Sigmoid colon (tissue), 7 donors: ENCODE measurements at regions of chr19 and their contacts with region 1.

Region 1: DNA sequence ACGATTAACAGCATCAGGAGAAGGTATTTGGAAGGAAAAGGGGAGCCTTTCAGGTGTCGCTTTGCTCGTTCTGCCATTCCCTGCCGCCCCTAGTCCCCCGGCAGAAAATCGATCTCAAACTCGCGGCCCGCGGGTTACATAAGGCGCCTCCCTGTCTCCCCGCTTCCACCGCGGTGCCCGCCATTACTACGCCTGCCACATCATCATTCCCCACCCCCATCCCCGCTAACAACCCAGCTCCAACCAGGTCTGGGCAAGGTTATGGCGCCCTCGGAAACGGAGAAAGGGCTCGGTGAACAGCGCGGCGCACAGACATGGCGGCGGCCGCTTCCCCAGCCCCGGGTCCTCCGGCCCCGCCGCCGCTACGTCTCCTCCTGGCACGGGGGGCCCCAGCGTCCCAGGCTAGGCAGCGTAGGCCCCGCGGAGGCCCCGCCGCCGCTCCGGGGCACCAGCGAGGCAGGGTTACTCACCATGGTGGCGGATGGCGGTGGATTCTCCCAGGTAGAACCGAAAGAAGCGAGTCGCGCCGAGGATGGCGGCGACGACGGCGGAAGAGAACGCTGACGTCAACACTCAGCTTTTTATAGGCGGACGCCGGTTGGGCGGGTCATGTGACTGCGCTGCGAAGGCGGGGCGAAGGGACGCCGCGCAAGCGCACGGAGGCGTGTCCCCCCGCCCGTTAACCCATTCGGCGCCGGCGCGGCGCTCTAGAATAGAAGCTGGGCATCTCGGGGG is at the start of gene EEF2:
- DNase-seq: peak; percentile 95
- H3K4me3 ChIP-seq: peak within 1 kb of the TSS; percentile 70 to 86 (median 82)
- H3K27ac ChIP-seq: peak within 1 kb of the TSS; percentile 92 to 96 (median 94)
- H3K4me1 ChIP-seq: peaks cover 0 to 62% (median 49%) of the 10 kb centered on the region in 4 donors
- H3K27me3 ChIP-seq: no peaks in the 10 kb centered on the region
- CTCF ChIP-seq: no peak
- EP300 ChIP-seq: peak in 2 of 4 donors; percentile 9 to 23
- POLR2A ChIP-seq: peak; percentile 99
- total RNA-seq, gene EEF2: 1,842 to 2,448 (median 2,055) TPM

Region 2: DNA sequence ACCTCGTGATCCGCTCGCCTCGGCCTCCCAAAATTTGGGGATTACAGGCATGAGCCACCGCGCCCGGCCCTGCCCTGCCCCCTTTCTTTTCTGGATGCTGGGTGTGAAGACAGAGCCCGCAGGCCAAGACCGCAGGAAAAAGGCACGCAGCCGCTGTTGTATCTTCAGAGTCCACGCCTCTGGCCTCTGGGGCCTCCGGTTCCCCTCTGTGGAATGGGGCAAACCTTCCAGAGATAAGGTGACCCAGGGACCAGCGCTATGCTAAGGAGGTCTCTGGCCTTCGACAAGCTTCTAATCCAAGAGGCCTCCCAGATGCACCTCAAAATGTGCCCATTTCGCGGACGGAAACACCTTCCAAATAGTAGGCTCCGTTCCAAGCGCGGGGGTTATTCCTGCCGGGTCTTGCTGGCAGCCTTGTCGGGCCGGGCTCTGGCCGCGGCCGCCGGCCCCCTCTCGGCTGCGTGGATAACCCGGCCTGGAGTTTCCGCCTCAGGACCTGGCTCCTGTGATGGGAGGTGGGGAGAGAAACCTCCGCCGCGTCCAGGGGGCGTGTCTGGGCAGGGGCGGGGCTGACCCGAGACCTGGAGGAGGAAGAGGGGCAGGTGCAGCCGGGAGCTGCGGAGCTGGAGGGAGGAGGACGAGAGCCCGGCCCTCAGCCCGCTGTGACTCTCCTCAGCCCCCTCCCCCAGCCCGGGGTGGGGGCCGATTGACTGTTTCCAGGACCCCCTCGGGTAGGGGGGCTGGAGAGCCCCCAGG is 263.8 kb before region 1 on chr19:
- intact Hi-C with region 1: no loop called
- DNase-seq: peak; percentile 82
- H3K4me3 ChIP-seq: peak overlapping the region in 3 of 4 donors; percentile 3 to 18 (median 5)
- H3K27ac ChIP-seq: no peak overlapping the region
- H3K4me1 ChIP-seq: peaks cover 0 to 23% (median 19%) of the 10 kb centered on the region in 4 donors
- H3K27me3 ChIP-seq: peaks cover 36 to 68% (median 45%) of the 10 kb centered on the region in 3 donors
- CTCF ChIP-seq: no peak
- EP300 ChIP-seq: no peak
- POLR2A ChIP-seq: peak in 1 of 2 donors; percentile 31

Region 3: DNA sequence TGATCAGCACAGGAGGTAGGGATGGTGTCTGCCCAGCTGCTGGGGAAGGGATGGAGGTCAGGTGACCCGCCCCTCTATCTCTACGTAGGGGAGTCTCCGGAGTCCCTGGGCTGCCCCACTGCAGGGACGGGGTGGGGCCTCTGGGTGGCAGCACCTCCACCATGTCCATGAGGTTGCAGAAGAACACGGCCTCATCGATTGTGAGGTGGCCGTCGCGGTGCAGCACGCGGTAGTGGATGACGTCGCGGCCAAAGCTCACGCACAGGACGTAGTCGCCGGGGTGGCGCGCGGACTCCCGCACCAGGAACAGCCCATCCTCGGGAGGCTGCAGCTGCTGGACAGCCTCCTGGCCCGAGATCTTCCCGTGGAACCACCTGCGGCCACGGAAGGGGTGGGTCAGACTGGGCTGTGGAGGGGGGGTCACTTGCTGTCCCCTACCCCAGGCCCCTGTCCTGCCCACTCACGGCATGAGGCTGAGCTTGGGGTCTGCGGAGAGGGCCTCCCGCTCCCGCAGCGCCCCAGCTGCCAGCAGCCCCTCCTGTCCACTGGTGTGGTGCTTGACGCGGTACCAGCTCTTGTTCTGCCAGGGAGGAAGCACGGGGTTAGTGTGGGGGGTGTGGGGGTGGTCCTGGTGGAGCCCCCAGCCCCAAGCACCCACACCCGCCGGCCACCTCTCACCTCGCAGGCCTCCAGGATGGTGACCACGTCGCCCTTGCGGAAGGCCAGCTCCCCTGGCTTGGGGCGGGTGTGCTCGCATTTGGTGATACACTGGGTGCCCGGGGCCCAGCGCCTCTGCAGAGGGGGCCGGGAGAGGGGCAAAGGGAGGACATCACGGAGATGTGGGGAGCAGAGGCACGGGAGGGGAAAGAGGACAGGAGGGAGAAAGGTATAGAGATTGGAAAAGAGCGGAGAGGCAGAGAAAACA is 201.2 kb before region 1 on chr19:
- intact Hi-C with region 1: no loop called
- DNase-seq: no peak
- H3K4me3 ChIP-seq: no peak overlapping the region
- H3K27ac ChIP-seq: no peak overlapping the region
- H3K4me1 ChIP-seq: peaks cover 0 to 13% (median 5%) of the 10 kb centered on the region in 4 donors
- H3K27me3 ChIP-seq: peaks cover 0 to 55% (median 49%) of the 10 kb centered on the region in 3 donors
- CTCF ChIP-seq: no peak
- EP300 ChIP-seq: no peak
- POLR2A ChIP-seq: no peak

Region 4: GRCh38 chr19:4007021-4007835 is 22.2 kb after region 1 on chr19 and contains the start of gene PIAS4:
- intact Hi-C with region 1: loop called (anchors 2 kb)
- DNase-seq: peak; percentile 97
- H3K4me3 ChIP-seq: peak within 1 kb of the TSS; percentile 72 to 100 (median 98)
- H3K27ac ChIP-seq: peak within 1 kb of the TSS; percentile 84 to 99 (median 97)
- H3K4me1 ChIP-seq: peaks cover 0 to 48% (median 47%) of the 10 kb centered on the region in 4 donors
- H3K27me3 ChIP-seq: no peaks in the 10 kb centered on the region
- CTCF ChIP-seq: no peak
- EP300 ChIP-seq: no peak
- POLR2A ChIP-seq: peak in 1 of 2 donors; percentile 49
- total RNA-seq, gene PIAS4: 16.5 to 29.9 (median 19.3) TPM

Region 5: GRCh38 chr19:4058034-4058692 is 73.1 kb after region 1 on chr19:
- intact Hi-C with region 1: no loop called
- DNase-seq: peak; percentile 97
- H3K4me3 ChIP-seq: peak overlapping the region; percentile 11 to 89 (median 36)
- H3K27ac ChIP-seq: peak overlapping the region; percentile 97 to 100 (median 98)
- H3K4me1 ChIP-seq: peaks cover 0 to 76% (median 69%) of the 10 kb centered on the region in 4 donors
- H3K27me3 ChIP-seq: no peaks in the 10 kb centered on the region
- CTCF ChIP-seq: peak in 1 of 4 experiments; percentile 8
- EP300 ChIP-seq: peak in 1 of 4 donors; percentile 6
- POLR2A ChIP-seq: peak in 1 of 2 donors; percentile 31

Region 6: DNA sequence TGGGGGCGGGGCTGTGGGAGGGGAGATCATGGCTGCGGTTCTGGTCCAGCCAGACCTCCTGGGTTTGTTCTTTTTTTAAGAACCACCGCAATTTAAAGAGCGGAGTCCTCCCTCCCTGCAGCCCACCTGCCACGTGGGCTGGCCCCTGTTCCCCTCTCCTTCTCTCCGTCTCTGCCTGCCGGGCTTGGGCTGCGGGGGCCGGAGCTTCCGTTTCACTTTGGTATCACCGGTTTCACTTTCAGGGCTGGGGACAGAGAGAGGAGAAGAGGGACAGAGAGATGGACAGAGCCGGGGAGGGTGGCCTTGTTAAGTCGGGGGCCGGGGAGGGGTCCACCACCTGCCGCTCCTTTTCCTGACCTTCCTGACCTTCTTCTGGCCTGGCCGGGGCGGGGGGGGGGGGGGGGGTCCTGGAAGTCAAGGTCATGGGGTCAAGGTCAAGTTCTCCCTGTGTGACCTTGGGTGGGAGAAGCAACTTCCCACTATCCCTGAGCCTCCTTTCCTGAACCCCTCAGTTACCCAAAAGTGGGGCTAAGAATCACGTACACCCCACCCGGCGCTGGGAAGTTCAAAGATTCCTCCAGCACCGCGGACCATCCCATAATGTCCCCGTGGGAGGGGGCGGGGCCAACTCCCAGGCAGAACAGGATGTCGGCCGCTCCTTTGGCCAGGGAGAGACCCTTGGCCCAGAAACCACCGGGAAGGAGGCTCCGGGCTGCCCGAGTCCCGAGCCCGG is 93.0 kb after region 1 on chr19:
- intact Hi-C with region 1: no loop called
- DNase-seq: peak; percentile 89
- H3K4me3 ChIP-seq: peak overlapping the region; percentile 47 to 59 (median 58)
- H3K27ac ChIP-seq: peak overlapping the region; percentile 82 to 88 (median 83)
- H3K4me1 ChIP-seq: peaks cover 0 to 19% (median 12%) of the 10 kb centered on the region in 4 donors
- H3K27me3 ChIP-seq: no peaks in the 10 kb centered on the region
- CTCF ChIP-seq: no peak
- EP300 ChIP-seq: no peak
- POLR2A ChIP-seq: no peak

Region 7: GRCh38 chr19:4123615-4124568 is 138.8 kb after region 1 on chr19 and contains the start of gene MAP2K2:
- intact Hi-C with region 1: loop called (anchors 5 kb)
- DNase-seq: peak; percentile 98
- H3K4me3 ChIP-seq: peak within 1 kb of the TSS; percentile 84 to 98 (median 96)
- H3K27ac ChIP-seq: peak within 1 kb of the TSS; percentile 73 to 86 (median 80)
- H3K4me1 ChIP-seq: peaks cover 0 to 34% (median 32%) of the 10 kb centered on the region in 4 donors
- H3K27me3 ChIP-seq: no peaks in the 10 kb centered on the region
- CTCF ChIP-seq: no peak
- EP300 ChIP-seq: no peak
- POLR2A ChIP-seq: peak; percentile 18 to 72
- total RNA-seq, gene MAP2K2: 48.2 to 76.4 (median 65.3) TPM

Region 8: DNA sequence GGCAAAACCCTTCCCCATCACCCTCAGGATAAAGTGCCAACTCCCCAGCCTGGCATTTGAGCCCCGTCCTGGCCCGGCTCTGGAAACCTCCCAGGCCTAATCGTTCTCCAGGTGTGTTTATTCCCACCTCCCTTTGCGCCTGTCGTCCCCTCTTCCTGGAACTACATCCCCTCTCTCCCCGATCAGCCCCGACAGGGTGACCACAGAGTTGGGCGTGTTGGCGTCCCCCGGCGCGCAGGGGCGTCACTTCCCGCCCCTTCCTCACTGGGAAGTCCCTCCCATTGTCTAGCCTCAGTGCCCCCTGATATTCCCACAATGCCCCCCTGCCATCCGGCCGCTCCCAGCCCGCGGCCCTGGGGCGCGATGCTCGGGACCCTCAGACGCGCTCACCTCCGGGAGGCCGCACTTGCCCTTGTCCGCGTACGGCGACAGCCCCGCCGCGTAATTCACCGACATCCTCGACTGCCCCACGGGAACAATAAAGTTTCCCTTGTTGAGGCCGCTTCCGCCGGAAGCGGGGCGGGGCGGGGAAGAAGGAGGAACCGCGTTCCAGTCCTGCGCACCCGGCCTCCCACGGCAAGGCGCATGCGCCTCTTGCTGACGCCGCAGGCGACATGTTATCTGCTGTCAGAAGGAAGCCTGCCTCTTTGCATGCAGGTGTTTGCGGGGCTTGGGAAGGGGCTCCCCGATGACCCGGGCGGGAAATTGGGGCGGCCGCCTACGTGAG is 197.2 kb after region 1 on chr19 and contains the starts of genes ANKRD24 and SIRT6:
- intact Hi-C with region 1: loop called (anchors 5 kb)
- DNase-seq: peak; percentile 98
- H3K4me3 ChIP-seq: peak within 1 kb of the TSS; percentile 82 to 100 (median 94)
- H3K27ac ChIP-seq: peak within 1 kb of the TSS; percentile 81 to 87 (median 82)
- H3K4me1 ChIP-seq: peaks cover 0 to 22% (median 20%) of the 10 kb centered on the region in 4 donors
- H3K27me3 ChIP-seq: no peaks in the 10 kb centered on the region
- CTCF ChIP-seq: no peak
- EP300 ChIP-seq: peak in 2 of 4 donors; percentile 21 to 51
- POLR2A ChIP-seq: peak; percentile 45 to 74
- total RNA-seq, gene ANKRD24: 0.36 to 0.99 (median 0.69) TPM
- total RNA-seq, gene SIRT6: 10.3 to 23.5 (median 18.1) TPM

Region 9: DNA sequence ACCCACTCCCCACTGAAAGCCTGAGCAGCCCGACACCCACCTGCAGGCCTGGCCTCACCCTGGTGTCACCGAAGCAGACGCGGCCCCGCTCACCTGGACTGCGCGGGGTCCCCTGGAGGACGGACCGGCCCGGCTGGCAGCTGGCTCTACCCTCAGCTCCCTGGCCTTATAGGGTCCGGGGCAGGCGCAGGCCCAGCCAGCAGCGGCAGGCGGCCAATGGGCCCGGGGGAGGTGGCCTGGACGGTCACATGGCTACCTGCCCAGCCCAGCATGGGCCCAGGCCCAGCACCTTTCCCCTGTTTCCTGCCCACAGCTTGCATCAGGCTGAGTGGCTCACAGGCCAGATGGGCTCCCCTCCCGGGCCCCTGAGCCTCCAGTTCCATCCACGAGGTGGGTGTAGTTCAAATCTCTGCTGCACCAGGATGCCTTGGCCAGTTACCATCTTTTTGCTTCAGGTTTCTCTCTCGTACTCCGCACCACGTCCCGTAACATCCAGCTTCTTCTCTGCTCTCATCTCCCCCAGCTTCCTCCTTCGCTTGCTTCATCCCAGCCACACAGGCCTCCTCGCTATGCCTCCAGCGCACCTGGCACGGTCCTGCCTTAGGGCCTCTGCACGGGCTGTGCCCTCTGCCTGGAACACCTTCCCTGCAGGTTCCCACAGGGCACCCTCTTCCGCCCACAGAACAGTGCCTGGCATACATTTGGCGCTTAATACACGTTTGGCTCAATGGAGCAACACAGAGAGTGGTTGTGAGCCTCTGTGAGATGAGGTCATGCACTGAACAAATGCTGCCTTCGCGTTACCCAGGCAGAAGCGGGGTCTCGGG is 533.5 kb after region 1 on chr19 and contains the start of gene PLIN4:
- intact Hi-C with region 1: loop called (anchors 10 kb)
- DNase-seq: peak; percentile 97
- H3K4me3 ChIP-seq: peak within 1 kb of the TSS; percentile 53 to 73 (median 60)
- H3K27ac ChIP-seq: peak within 1 kb of the TSS; percentile 91 to 98 (median 94)
- H3K4me1 ChIP-seq: peaks cover 0 to 56% (median 37%) of the 10 kb centered on the region in 4 donors
- H3K27me3 ChIP-seq: no peaks in the 10 kb centered on the region
- CTCF ChIP-seq: no peak
- EP300 ChIP-seq: peak in 2 of 4 donors; percentile 48 to 81
- POLR2A ChIP-seq: peak; percentile 91 to 97
- total RNA-seq, gene PLIN4: 41.3 to 71.7 (median 55.9) TPM